Gastrocnemius medialis (tissue), 4 donors: ENCODE measurements at regions of chr1 and their contacts with region 1.

Region 1: GRCh38 chr1:81407000-81407875 is 393.5 kb upstream of the ADGRL2 start:
- DNase-seq: no peak
- ATAC-seq: no peak
- H3K4me3 ChIP-seq: no peak overlapping the region
- H3K27ac ChIP-seq: no peak overlapping the region
- H3K4me1 ChIP-seq: peaks cover 4 to 5% of the 10 kb centered on the region in 2 donors
- H3K27me3 ChIP-seq: no peaks in the 10 kb centered on the region
- CTCF ChIP-seq: no peak
- POLR2A ChIP-seq: no peak

Region 2: GRCh38 chr1:80607064-80607463 is 800.2 kb before region 1 on chr1:
- in situ Hi-C with region 1: no loop called
- intact Hi-C with region 1: no loop called
- DNase-seq: no peak
- ATAC-seq: no peak
- H3K4me3 ChIP-seq: no peak overlapping the region
- H3K27ac ChIP-seq: no peak overlapping the region
- H3K4me1 ChIP-seq: no peaks in the 10 kb centered on the region
- H3K27me3 ChIP-seq: no peaks in the 10 kb centered on the region
- CTCF ChIP-seq: no peak
- POLR2A ChIP-seq: no peak

Region 3: DNA sequence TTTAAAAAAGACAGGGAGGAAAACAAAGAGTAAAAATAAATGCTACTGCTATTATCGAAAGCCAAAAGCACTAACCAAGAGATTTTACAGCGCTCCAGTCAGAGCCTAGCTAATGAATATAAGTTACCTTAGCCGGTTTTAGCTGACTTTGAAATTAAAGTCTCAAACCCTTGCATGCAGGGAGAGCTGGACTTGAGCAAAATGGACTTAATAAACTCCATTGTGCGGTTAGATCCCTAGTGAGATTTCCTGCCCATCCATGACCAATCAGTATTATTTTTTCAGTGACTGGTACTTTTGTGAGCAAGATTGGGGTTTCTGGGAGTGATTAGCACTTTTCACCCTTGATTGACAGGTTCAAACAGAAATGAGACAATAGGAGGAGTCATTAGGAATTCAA is 60.1 kb after region 1 on chr1:
- in situ Hi-C with region 1: loop called in 1 of 4 experiments (anchors 10 kb)
- intact Hi-C with region 1: no loop called
- DNase-seq: no peak
- ATAC-seq: no peak
- H3K4me3 ChIP-seq: no peak overlapping the region
- H3K27ac ChIP-seq: no peak overlapping the region
- H3K4me1 ChIP-seq: no peaks in the 10 kb centered on the region
- H3K27me3 ChIP-seq: no peaks in the 10 kb centered on the region
- CTCF ChIP-seq: no peak
- POLR2A ChIP-seq: no peak